BJ (cell line): ENCODE measurements at regions of chr17 and their contacts with region 1.

Region 1: GRCh38 chr17:39621523-39622379 is 5.0 kb upstream of the PPP1R1B start:
- DNase-seq: no peak
- H3K4me3 ChIP-seq: no peak overlapping the region
- H3K27me3 ChIP-seq: peaks cover 22% of the 10 kb centered on the region
- CTCF ChIP-seq: peak; percentile 100

Region 2: DNA sequence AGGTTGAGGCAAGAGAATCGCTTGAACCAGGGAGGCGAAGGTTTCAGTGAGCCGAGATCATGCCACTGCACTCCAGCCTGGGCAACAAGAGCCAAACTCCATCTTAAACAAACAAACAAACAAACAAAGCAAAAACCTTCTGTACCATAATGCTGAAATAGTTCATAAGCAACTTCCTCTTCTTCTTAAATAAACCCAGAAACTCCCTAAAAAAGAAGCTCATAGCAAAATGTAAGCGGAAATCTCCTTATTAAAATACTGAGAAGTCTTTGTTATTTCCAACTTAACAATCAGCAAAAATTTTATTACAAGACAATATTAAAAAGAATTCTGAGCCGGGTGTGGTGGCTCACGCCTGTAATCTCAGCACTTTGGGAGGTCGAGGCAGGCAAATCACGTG is 303.1 kb before region 1 on chr17:
- CTCF ChIA-PET with region 1: no interaction called
- POLR2A ChIA-PET with region 1: no interaction called
- DNase-seq: no peak
- H3K4me3 ChIP-seq: no peak overlapping the region
- H3K27me3 ChIP-seq: no peaks in the 10 kb centered on the region
- CTCF ChIP-seq: no peak

Region 3: GRCh38 chr17:39507511-39507910 is 114.2 kb before region 1 on chr17:
- CTCF ChIA-PET with region 1: no interaction called
- POLR2A ChIA-PET with region 1: no interaction called
- DNase-seq: no peak
- H3K4me3 ChIP-seq: no peak overlapping the region
- H3K27me3 ChIP-seq: no peaks in the 10 kb centered on the region
- CTCF ChIP-seq: no peak

Region 4: DNA sequence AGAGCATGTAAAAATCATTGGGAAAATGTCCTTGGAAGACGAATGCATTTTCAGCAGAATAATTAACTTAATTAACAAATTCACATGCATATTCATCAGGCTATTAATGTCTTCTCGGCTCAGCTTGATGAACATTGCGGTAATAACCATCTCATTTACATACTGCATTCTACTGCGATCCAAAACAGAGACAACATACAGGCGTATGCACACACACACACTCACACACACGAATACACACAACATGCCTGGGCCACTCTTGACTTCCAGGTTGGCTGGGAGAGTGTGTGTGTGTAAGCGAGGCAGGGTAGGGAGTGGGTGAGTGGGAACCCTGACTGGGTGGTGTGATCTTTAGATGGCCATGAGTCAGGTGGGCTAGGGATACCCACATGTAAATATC is 58.8 kb before region 1 on chr17:
- CTCF ChIA-PET with region 1: interaction called, 17 read pairs
- POLR2A ChIA-PET with region 1: no interaction called
- DNase-seq: no peak
- H3K4me3 ChIP-seq: no peak overlapping the region
- H3K27me3 ChIP-seq: no peaks in the 10 kb centered on the region
- CTCF ChIP-seq: no peak

Region 5: GRCh38 chr17:39598047-39598481 is 23.7 kb before region 1 on chr17:
- CTCF ChIA-PET with region 1: interaction called, 35 read pairs
- POLR2A ChIA-PET with region 1: no interaction called
- DNase-seq: no peak
- H3K4me3 ChIP-seq: no peak overlapping the region
- H3K27me3 ChIP-seq: peaks cover 72% of the 10 kb centered on the region
- CTCF ChIP-seq: no peak

Region 6: DNA sequence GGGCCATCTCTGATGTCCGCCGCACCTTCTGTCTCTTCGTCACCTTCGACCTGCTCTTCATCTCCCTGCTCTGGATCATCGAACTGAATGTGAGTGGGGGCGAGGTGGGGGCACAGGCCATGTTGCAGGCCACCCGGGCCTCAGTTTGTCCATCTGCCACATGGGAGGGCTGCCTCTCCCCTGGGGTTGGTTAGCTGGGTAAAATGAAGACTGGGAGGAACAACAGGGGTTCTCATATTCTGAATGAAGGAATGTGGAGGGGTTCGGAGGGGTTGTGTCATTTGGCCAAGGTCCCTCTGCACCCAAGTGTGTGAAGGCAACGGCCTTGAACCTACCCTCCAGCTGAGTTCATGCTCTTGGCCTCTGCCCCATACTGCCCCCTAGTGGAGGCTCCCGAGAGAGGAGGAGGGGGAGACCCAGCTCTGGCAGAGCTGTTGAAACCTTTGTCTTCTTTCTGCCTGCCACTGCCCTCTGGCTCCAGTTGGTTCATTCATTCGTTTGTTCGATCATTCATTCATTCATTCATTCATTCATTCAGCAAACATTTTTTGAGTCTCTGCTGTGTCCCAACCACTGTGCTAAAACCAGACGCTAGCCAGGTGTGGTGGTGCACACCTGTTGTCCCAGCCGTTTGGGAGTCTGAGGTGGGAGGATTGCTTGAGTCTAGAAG is 32.0 kb after region 1 on chr17:
- CTCF ChIA-PET with region 1: interaction called, 107 read pairs
- POLR2A ChIA-PET with region 1: no interaction called
- DNase-seq: no peak
- H3K4me3 ChIP-seq: no peak overlapping the region
- H3K27me3 ChIP-seq: no peaks in the 10 kb centered on the region
- CTCF ChIP-seq: peak; percentile 90

Region 7: GRCh38 chr17:39699818-39700147 is 78.0 kb after region 1 on chr17 and contains the start of gene ERBB2:
- CTCF ChIA-PET with region 1: interaction called, 18 read pairs
- POLR2A ChIA-PET with region 1: no interaction called
- DNase-seq: peak; percentile 33
- H3K4me3 ChIP-seq: peak within 1 kb of the TSS; percentile 84
- H3K27me3 ChIP-seq: no peaks in the 10 kb centered on the region
- CTCF ChIP-seq: no peak
- polyA plus RNA-seq, gene ERBB2: 22.8 and 35.4 TPM in 2 replicates

Region 8: GRCh38 chr17:39763046-39763820 is 141.5 kb after region 1 on chr17:
- CTCF ChIA-PET with region 1: interaction called, 13 read pairs
- POLR2A ChIA-PET with region 1: no interaction called
- DNase-seq: no peak
- H3K4me3 ChIP-seq: no peak overlapping the region
- H3K27me3 ChIP-seq: peaks cover 20% of the 10 kb centered on the region
- CTCF ChIP-seq: no peak